GM12878 (cell line): ENCODE measurements at regions of chr6 and their contacts with region 1.

Region 1: GRCh38 chr6:17446713-17447112 is 53.3 kb downstream of the CAP2 start:
- DNase-seq: no peak
- ATAC-seq: peak; percentile 58
- H3K4me3 ChIP-seq: no peak overlapping the region
- H3K27ac ChIP-seq: no peak overlapping the region
- H3K4me1 ChIP-seq: peaks cover 5% of the 10 kb centered on the region
- H3K27me3 ChIP-seq: no peaks in the 10 kb centered on the region
- CTCF ChIP-seq: no peak
- EP300 ChIP-seq: no peak
- POLR2A ChIP-seq: no peak
- RAD21 ChIP-seq: no peak

Region 2: DNA sequence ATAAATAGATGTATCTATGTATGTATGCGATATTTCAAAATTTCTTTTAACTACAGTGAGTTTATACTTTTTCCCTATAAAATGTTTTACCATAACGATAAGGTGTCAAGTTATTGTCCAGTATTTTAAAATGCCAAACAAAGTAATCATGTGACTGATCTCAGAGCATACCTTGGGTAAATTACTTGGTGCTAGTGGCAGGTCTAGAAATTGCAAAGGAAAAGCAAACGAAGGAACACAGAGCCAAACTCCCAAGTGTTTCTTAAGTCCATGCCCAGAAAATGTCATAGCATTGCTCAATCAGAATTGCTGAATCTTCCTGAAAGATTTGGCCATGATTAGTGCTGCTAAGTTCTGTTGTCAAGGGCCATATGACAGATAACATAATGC is 24.2 kb after region 1 on chr6:
- CTCF ChIA-PET with region 1: interaction called, 9 read pairs
- POLR2A ChIA-PET with region 1: interaction called, 4 read pairs
- RAD21 ChIA-PET with region 1: interaction called, 13 read pairs
- SMC1A ChIA-PET with region 1: interaction called, 16 read pairs
- in situ Hi-C with region 1: no loop called
- intact Hi-C with region 1: no loop called
- DNase-seq: no peak
- ATAC-seq: no peak
- H3K4me3 ChIP-seq: no peak overlapping the region
- H3K27ac ChIP-seq: no peak overlapping the region
- H3K4me1 ChIP-seq: no peaks in the 10 kb centered on the region
- H3K27me3 ChIP-seq: 0 out of 4 replicates have a peak, but pooled peaks cover 0 to 2% of the 10 kb centered on the region in 2 experiments
- CTCF ChIP-seq: no peak
- EP300 ChIP-seq: no peak
- POLR2A ChIP-seq: no peak
- RAD21 ChIP-seq: no peak

Region 3: DNA sequence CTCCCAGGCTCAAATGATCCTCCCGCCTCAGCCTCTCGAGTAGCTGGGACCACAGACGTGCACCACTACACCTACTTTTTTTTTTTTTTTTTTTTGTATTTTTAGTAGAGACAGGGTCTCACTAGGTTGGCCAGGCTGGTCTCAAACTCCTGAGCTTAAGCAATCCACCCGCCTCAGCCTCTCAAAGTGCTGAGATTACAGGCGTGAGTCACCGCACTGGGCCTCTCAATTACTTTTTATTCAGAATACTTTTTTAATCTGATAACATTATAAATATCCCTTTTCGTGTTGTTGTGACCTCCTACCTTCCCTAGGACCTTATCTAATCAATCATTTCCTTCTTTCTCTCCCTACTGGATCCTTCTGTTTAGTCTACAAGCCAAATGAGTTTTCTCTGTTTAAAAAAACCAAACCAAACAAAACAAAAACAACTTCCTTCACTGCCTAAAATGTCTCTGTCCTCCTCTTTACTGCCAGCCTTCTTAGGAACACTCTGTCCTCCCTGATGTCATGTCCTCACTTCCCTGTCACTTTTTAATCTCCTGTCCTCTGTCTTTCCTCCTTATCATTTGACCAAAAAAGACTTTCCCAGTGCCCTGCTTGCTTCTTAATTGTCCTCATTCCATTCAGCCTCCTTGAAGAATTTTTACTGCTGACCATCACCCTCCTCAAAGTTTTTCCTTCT is 31.7 kb after region 1 on chr6:
- CTCF ChIA-PET with region 1: no interaction called
- POLR2A ChIA-PET with region 1: interaction called, 5 read pairs
- RAD21 ChIA-PET with region 1: interaction called, 13 read pairs
- SMC1A ChIA-PET with region 1: interaction called, 16 read pairs
- in situ Hi-C with region 1: no loop called
- intact Hi-C with region 1: no loop called
- DNase-seq: no peak
- ATAC-seq: no peak
- H3K4me3 ChIP-seq: no peak overlapping the region
- H3K27ac ChIP-seq: no peak overlapping the region
- H3K4me1 ChIP-seq: no peaks in the 10 kb centered on the region
- H3K27me3 ChIP-seq: 0 out of 4 replicates have a peak, but pooled peaks cover 0 to 2% of the 10 kb centered on the region in 2 experiments
- CTCF ChIP-seq: no peak
- EP300 ChIP-seq: no peak
- POLR2A ChIP-seq: no peak
- RAD21 ChIP-seq: no peak